ENCODE measurements at regions of chr17 and their contacts with region 1.

Region 1: GRCh38 chr17:41801374-41802271 is 10.1 kb downstream of the P3H4 start:
- DNase-seq: peak; percentile 94
- ATAC-seq: peak; percentile 74
- H3K4me3 ChIP-seq: peak overlapping the region; percentile 52; the same call in 1 of the 2 replicates
- H3K27ac ChIP-seq: peak overlapping the region; percentile 90
- H3K4me1 ChIP-seq: peaks cover 21% of the 10 kb centered on the region
- H3K27me3 ChIP-seq: no peaks in the 10 kb centered on the region
- CTCF ChIP-seq: peak; percentile 89

Region 2: GRCh38 chr17:41738077-41738735 is 63.4 kb before region 1 on chr17:
- CTCF ChIA-PET with region 1: interaction called, 6 read pairs
- POLR2A ChIA-PET with region 1: interaction called, 26 read pairs
- intact Hi-C with region 1: loop called (anchors 1 kb)
- DNase-seq: peak; percentile 86
- ATAC-seq: peak; percentile 54
- H3K4me3 ChIP-seq: no peak overlapping the region
- H3K27ac ChIP-seq: peak overlapping the region; percentile 91
- H3K4me1 ChIP-seq: peaks cover 31% of the 10 kb centered on the region
- H3K27me3 ChIP-seq: no peaks in the 10 kb centered on the region
- CTCF ChIP-seq: peak; percentile 89

Region 3: GRCh38 chr17:41773190-41773588 is 28.4 kb before region 1 on chr17:
- CTCF ChIA-PET with region 1: interaction called, 4 read pairs
- POLR2A ChIA-PET with region 1: interaction called, 3 read pairs
- intact Hi-C with region 1: loop called (anchors 2 kb)
- DNase-seq: peak; percentile 92
- ATAC-seq: peak; percentile 80
- H3K4me3 ChIP-seq: no peak overlapping the region
- H3K27ac ChIP-seq: peak overlapping the region; percentile 93
- H3K4me1 ChIP-seq: peaks cover 55% of the 10 kb centered on the region
- H3K27me3 ChIP-seq: no peaks in the 10 kb centered on the region
- CTCF ChIP-seq: no peak

Region 4: DNA sequence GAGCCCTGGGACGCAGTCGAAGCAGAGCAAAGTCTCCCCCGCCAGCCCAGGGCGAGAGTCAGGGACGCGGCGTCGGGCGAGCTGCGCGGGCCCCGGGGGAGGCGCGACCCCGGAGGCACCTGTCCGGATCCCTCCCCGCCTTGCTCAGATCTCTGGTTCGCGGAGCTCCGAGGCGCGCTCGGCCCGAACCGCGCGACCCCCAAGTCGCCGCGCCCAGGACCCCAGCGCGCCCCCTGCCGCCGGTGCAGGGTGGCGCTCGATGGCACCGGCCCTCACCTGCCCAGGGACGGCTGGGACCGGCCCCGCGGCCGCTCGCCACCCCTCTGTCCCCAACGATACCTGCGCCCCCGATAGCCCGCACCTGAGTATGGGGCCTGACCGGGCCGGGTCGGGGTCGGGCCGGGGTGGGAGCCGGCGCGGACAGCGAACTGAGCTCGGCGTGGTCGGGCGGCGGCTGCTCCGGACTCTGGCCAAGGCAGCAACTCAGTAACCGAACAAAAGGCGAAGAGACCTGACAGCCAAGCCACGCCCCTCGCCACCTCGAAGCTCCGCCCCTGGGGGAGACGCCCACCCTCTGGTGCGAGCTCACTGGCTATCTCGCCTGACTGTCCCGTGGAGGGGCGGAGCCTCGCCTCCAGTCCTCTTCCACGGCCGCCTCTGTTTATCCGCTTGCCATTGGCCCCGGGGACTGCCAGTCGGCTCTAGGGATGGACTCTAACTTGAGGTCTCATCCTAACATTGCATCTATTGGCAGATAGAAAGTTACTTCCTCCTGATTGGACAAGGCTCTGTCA is 15.2 kb before region 1 on chr17 and contains the start of gene JUP:
- CTCF ChIA-PET with region 1: interaction called, 15 read pairs
- POLR2A ChIA-PET with region 1: interaction called, 26 read pairs
- intact Hi-C with region 1: loop called (anchors 1 kb)
- DNase-seq: peak; percentile 98
- ATAC-seq: peak; percentile 97
- H3K4me3 ChIP-seq: peak within 1 kb of the TSS; percentile 88
- H3K27ac ChIP-seq: peak within 1 kb of the TSS; percentile 88
- H3K4me1 ChIP-seq: peaks cover 22% of the 10 kb centered on the region
- H3K27me3 ChIP-seq: no peaks in the 10 kb centered on the region
- CTCF ChIP-seq: peak; percentile 60
- total RNA-seq, gene JUP: 132 and 168 TPM in 2 replicates

Measured in PC-3 (cell line).